Psoas muscle (tissue), 8 donors: ENCODE measurements at regions of chr7 and their contacts with region 1.

Region 1: GRCh38 chr7:116809636-116810266 is 52.6 kb upstream of the CAPZA2 start:
- DNase-seq: no peak
- ATAC-seq: peak; percentile 64 to 79 (median 71)
- H3K4me3 ChIP-seq: peak overlapping the region; percentile 33
- H3K27ac ChIP-seq: peak overlapping the region; percentile 79
- H3K4me1 ChIP-seq: peaks cover 25% of the 10 kb centered on the region
- H3K27me3 ChIP-seq: no peaks in the 10 kb centered on the region
- CTCF ChIP-seq: peak; percentile 78

Region 2: DNA sequence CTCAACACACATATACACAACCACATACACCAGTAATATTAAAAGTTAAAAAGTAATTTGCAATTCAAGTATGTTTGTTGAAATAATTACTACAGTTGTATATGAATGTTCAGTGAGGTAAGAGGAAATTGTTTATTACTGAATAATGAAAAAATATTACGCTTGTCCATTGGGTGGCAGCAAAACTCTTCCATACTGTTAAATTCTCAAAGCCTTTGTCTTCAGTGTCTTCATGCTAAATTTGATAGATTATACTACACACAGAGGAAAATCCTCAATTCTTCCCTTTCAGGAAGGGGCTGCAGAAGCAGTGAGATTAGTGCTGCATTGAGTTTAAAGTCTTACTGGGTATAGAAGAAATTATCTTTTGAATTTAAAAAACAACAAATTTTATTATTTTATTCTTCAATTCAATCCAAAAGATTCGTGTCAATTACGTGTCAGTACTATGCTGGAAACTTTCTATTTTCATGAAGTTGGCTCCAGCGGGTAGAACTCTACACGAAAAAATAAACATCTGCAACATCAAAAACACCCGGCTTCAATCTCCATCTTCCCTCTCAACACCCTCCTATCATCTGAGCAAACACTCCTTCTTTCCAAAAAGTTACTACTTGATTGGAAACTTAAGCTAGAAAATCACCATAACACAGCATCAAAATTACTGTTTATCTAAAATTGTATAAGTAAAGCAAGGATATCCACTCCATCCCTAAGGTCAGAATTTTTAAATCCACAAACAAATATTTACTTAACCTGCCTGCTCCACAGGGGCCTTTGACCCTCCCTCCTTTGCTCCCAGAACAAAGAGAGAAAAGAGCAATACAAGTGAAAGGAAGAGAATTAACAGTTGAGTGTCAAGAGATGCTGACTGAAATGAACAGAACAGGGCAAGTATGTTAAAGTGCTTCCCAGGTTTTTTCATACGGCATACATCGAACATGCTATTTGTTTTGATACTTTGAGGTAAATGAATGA is 636.4 kb before region 1 on chr7:
- intact Hi-C with region 1: loop called (anchors 10 kb)
- DNase-seq: no peak
- ATAC-seq: peak in 1 of 4 donors; percentile 57
- H3K4me3 ChIP-seq: no peak overlapping the region
- H3K27ac ChIP-seq: no peak overlapping the region
- H3K4me1 ChIP-seq: no peaks in the 10 kb centered on the region
- H3K27me3 ChIP-seq: no peaks in the 10 kb centered on the region
- CTCF ChIP-seq: peak; percentile 61

Region 3: GRCh38 chr7:116271963-116272839 is 537.5 kb before region 1 on chr7:
- intact Hi-C with region 1: loop called (anchors 5 to 10 kb)
- DNase-seq: peak; percentile 27 to 58
- ATAC-seq: peak; percentile 99 to 100 (median 100)
- H3K4me3 ChIP-seq: peak overlapping the region; percentile 34
- H3K27ac ChIP-seq: peak overlapping the region; percentile 81
- H3K4me1 ChIP-seq: peaks cover 38% of the 10 kb centered on the region
- H3K27me3 ChIP-seq: no peaks in the 10 kb centered on the region
- CTCF ChIP-seq: no peak

Region 4: GRCh38 chr7:116560021-116560970 is 249.5 kb before region 1 on chr7:
- intact Hi-C with region 1: no loop called
- DNase-seq: no peak
- ATAC-seq: no peak
- H3K4me3 ChIP-seq: no peak overlapping the region
- H3K27ac ChIP-seq: no peak overlapping the region
- H3K4me1 ChIP-seq: no peaks in the 10 kb centered on the region
- H3K27me3 ChIP-seq: peaks cover 0 to 4% (median 0%) of the 10 kb centered on the region in 3 donors
- CTCF ChIP-seq: no peak

Region 5: GRCh38 chr7:116588641-116589594 is 220.8 kb before region 1 on chr7:
- intact Hi-C with region 1: loop called (anchors 1 to 2 kb)
- DNase-seq: no peak
- ATAC-seq: peak in 3 of 4 donors; percentile 36 to 69 (median 57)
- H3K4me3 ChIP-seq: no peak overlapping the region
- H3K27ac ChIP-seq: no peak overlapping the region
- H3K4me1 ChIP-seq: peaks cover 10% of the 10 kb centered on the region
- H3K27me3 ChIP-seq: no peaks in the 10 kb centered on the region
- CTCF ChIP-seq: peak; percentile 78

Region 6: DNA sequence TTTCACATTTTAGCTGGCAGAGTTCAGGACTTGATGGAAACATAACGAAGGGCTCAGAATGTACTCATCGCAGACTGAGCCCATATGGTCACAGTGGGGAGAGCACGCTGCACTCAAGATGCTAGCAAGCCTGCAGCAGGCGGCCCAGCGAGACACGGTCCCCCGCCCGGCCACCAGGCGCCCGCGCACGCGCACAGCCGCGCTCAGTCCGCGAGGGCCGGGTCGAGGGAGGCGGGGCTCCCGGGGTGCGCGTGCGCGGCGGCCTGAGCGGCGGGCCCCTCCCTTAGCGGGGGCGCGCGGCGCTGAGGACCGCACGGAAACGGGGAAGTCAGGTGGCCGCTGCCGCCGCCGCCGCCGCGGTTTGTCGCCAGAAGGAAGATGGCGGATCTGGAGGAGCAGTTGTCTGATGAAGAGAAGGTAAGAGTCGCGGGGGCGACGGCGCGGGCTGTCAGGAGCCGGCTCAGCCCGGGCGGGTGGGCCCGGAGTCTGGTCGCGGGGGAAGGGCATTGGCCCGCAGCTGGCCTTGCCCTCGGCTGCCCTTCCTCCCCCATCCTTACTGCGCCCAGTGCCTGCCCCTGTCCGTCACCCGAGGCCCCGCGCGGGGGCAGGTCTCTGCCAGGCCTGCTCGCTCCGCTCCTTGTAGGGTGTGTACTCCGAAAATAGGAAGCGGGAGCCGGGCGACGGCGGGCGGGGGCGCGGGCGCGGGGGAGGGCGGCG is 52.6 kb after region 1 on chr7 and contains the start of gene CAPZA2:
- intact Hi-C with region 1: loop called in 1 of 2 experiments (anchors 5 kb)
- DNase-seq: peak; percentile 96 to 97
- ATAC-seq: peak; percentile 95 to 97 (median 96)
- H3K4me3 ChIP-seq: peak within 1 kb of the TSS; percentile 94
- H3K27ac ChIP-seq: peak within 1 kb of the TSS; percentile 100
- H3K4me1 ChIP-seq: peaks cover 32% of the 10 kb centered on the region
- H3K27me3 ChIP-seq: no peaks in the 10 kb centered on the region
- CTCF ChIP-seq: peak; percentile 62
- total RNA-seq, gene CAPZA2: 152 to 271 (median 232) TPM